ENCODE measurements at regions of chr4 and their contacts with region 1.

Region 1: DNA sequence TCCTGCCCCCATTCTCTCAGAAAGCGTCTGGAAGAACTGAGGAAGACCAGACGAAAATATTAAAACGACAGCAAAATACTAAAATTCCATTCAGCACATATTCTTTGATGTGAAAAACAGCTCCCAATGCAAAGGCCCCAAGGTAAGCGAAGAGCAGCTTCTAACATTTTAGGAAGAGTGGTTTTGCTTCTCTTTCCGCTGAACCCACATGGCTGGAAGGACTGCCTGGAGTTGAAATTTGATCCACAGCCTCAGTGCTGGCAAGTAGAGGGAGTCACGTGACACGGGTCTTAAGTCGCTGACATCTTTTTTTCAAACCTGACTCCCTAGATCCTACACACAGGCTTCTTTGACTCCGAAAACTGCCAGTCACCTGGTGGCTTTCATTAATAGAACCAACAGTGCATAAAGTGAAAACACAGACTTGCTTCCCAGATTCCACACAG is at the start of gene FAM13A:
- DNase-seq: peak; percentile 30 to 91
- H3K4me3 ChIP-seq: peak within 1 kb of the TSS; percentile 54 to 63
- H3K27ac ChIP-seq: peak within 1 kb of the TSS; percentile 40 to 66
- H3K4me1 ChIP-seq: peaks cover 0 to 9% of the 10 kb centered on the region in 2 donors
- H3K27me3 ChIP-seq: no peaks in the 10 kb centered on the region
- CTCF ChIP-seq: no peak
- total RNA-seq, gene FAM13A: 13.2 TPM

Region 2: DNA sequence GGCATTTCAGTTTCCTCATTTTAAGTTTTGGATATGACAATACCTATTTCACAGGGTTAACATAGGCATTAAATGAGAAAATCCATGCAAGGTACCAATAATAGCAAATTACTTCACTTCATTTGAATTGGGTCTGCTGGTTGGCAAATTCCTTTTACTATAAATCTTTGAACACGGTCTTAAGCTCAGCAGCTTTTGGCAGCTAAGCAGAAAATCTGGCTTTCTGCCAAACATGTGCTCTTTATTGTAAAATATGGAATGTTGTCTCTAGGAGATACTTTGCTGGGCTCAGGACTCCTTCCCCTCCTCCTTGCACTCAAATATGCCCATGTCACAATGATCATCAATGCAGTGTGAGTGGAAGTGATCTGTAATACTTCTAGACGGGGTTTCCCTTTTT is 1423.7 kb before region 1 on chr4:
- intact Hi-C with region 1: no loop called
- DNase-seq: no peak
- H3K4me3 ChIP-seq: no peak overlapping the region
- H3K27ac ChIP-seq: peak overlapping the region in 1 of 2 donors; percentile 37
- H3K4me1 ChIP-seq: peaks cover 5 to 15% of the 10 kb centered on the region in 2 donors
- H3K27me3 ChIP-seq: no peaks in the 10 kb centered on the region
- CTCF ChIP-seq: no peak

Region 3: DNA sequence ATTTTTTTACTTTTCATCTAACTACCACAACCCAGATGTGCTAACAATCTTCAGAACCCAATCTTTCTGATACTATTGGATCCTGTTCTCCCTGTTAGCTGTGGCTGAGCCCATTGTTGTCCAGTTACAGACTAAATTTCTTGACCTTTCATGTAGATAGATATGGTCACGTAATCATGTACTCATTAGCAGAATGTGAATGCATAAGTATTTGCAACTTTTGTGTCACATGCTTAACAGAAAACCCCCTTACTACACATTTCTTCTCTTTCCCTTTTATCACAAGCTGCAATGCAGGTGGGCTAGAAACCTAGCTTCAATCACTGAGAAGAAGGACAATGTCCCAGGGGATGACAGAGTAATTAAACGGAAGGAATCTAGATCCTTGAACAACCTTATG is 13.1 kb after region 1 on chr4:
- intact Hi-C with region 1: no loop called
- DNase-seq: no peak
- H3K4me3 ChIP-seq: no peak overlapping the region
- H3K27ac ChIP-seq: no peak overlapping the region
- H3K4me1 ChIP-seq: no peaks in the 10 kb centered on the region
- H3K27me3 ChIP-seq: no peaks in the 10 kb centered on the region
- CTCF ChIP-seq: no peak

Region 4: DNA sequence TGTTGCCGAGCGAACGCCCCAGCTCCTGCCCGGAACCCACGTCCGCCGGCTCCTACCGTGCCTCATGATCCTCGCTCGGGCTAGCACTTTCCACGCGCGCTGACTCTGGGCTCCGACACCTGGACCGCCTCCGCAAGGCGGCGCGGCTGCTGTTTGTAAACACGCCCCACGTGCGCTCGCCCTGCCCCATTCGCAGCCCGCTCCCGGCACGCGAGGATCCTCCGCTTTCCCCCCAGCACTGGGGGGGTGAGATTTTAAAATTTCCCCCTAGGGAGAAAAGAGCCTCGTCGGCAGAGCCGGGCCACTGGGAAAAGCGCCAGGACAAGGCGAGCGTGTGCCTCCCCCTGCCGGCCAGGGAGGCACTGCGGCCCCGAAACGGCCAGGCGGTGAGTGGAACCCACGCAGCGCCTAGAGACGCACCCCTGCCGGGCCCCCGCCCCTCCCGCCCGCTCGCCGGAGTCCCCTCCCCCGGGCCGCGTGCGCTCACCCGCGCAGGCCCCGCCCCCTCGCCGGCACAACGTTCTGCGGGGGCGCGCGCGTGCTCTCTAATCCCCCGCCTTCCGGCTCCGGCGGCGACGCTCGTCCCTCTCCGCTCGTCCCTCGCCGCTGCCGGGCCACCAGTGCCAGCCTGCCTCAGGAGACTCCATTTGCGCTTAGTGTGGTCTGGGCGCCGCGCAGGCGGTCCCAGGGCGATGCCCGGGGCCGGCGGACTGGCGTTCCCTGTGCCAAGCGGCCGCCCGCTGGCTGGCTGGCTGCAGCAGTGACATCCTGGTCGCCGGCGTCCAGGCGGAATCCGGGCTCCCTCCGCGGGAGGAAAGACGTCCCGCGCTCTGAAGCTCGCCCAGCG is 54.2 kb after region 1 on chr4 and contains the start of gene TIGD2:
- intact Hi-C with region 1: loop called (anchors 2 kb)
- DNase-seq: peak; percentile 29 to 91
- H3K4me3 ChIP-seq: peak within 1 kb of the TSS; percentile 68 to 79
- H3K27ac ChIP-seq: peak within 1 kb of the TSS; percentile 77 to 81
- H3K4me1 ChIP-seq: peaks cover 3 to 4% of the 10 kb centered on the region in 2 donors
- H3K27me3 ChIP-seq: no peaks in the 10 kb centered on the region
- CTCF ChIP-seq: peak; percentile 79 to 86 (median 82)
- total RNA-seq, gene TIGD2: 0.21 TPM

Measured in ascending aorta (tissue), 2 donors.